ENCODE measurements at regions of chr11 and their contacts with region 1.

Region 1: GRCh38 chr11:38791302-38791961 is 2193.4 kb upstream of the RAG2 start:
- DNase-seq: peak; percentile 40 to 51
- H3K4me3 ChIP-seq: no peak overlapping the region
- H3K27ac ChIP-seq: no peak overlapping the region
- H3K4me1 ChIP-seq: no peaks in the 10 kb centered on the region
- H3K27me3 ChIP-seq: no peaks in the 10 kb centered on the region
- CTCF ChIP-seq: peak; percentile 97

Region 2: DNA sequence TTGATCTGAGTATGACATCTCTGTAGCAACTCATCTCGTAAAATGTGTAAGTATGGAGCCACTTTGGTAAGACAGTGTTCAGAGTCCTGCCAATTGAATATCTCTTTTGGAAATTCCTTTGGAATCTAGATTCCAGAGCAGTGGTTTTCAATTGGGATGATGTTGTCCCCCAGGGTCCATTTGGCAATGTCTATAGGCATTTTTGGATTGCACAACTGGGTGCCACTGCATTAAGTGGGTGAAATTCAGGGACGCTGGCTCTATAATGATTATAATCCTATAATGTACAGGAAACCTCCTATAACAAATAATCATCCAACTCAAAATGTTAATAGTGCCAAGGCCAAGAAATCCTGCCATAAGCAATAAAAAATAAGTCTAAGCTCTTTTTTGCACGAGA is 1788.6 kb before region 1 on chr11:
- CTCF ChIA-PET with region 1: no interaction called
- POLR2A ChIA-PET with region 1: no interaction called
- intact Hi-C with region 1: loop called (anchors 10 kb)
- DNase-seq: no peak
- H3K4me3 ChIP-seq: no peak overlapping the region
- H3K27ac ChIP-seq: no peak overlapping the region
- H3K4me1 ChIP-seq: no peaks in the 10 kb centered on the region
- H3K27me3 ChIP-seq: no peaks in the 10 kb centered on the region
- CTCF ChIP-seq: no peak

Region 3: DNA sequence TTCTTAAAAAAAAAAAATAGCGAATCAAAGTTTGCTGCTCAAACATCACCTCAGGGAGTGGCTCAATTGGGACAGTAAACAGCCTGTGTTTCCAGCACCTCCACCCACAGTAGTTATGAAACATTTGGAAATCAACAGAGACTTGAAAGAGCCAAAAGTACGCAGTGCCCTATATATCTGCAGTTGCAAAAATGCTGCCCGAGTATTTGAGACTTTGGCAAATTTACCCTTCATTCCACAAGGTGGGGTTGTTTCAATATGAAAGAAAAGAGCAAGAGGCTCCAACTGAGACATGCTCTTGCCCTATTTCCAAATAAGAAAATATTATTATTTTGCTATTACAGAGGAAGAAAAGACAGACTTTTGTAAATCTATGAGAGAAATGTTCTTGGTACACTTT is 1342.3 kb before region 1 on chr11:
- CTCF ChIA-PET with region 1: no interaction called
- POLR2A ChIA-PET with region 1: no interaction called
- intact Hi-C with region 1: loop called (anchors 1 kb)
- DNase-seq: peak; percentile 1 to 50
- H3K4me3 ChIP-seq: no peak overlapping the region
- H3K27ac ChIP-seq: no peak overlapping the region
- H3K4me1 ChIP-seq: no peaks in the 10 kb centered on the region
- H3K27me3 ChIP-seq: no peaks in the 10 kb centered on the region
- CTCF ChIP-seq: peak; percentile 85

Region 4: DNA sequence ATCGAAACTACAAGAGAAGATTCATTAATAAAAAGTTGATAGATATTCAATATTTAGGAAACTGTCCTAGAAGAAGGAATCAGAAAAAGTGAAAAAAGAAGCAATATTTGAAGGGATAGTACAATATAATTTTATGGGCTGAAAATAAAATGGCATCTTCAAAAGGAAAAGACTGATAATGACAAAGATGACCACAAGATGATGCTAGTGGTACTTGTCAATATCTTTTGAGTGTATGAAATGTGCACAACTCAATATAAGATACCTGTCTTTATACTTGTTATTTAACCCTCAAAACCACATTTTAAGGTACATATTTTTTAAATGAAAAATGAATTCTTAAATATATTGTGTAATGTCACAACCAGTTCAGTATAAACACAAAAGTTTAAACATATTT is 1133.8 kb before region 1 on chr11:
- CTCF ChIA-PET with region 1: no interaction called
- POLR2A ChIA-PET with region 1: no interaction called
- intact Hi-C with region 1: loop called (anchors 1 kb)
- DNase-seq: no peak
- H3K4me3 ChIP-seq: no peak overlapping the region
- H3K27ac ChIP-seq: no peak overlapping the region
- H3K4me1 ChIP-seq: no peaks in the 10 kb centered on the region
- H3K27me3 ChIP-seq: no peaks in the 10 kb centered on the region
- CTCF ChIP-seq: peak; percentile 73

Region 5: DNA sequence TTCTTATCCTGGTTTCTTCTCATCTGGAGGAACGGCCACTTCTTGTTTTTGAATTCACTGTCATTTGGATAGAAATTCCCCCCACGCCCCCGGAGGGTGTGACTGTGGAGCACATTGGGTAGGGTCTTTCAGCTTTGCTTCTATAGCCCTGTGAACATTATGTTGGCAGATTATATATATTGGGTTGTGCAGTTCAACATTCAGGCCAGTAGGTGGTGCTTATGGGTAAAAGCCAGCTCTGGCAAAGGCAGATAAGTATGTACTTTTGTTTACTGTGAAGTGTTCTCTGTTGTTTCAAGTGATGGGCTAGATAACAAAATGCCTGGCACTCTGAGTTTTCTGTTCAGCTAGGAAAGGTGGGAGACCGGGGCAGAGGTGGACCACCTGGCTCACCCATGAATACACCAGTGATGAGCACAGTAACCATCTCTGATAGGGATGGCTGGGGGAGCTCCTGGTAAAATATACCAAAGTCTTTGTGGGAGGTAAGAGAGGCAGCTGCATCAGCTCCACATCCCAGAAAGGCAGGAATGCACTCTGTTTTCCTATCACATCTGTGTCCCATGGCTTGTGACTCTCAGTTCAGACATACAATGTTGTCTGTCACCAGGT is 845.2 kb before region 1 on chr11:
- CTCF ChIA-PET with region 1: no interaction called
- POLR2A ChIA-PET with region 1: no interaction called
- intact Hi-C with region 1: loop called (anchors 2 kb)
- DNase-seq: peak in 1 of 2 experiments; percentile 35
- H3K4me3 ChIP-seq: no peak overlapping the region
- H3K27ac ChIP-seq: no peak overlapping the region
- H3K4me1 ChIP-seq: no peaks in the 10 kb centered on the region; the same call in 1 of the 2 replicates
- H3K27me3 ChIP-seq: no peaks in the 10 kb centered on the region
- CTCF ChIP-seq: peak; percentile 95

Region 6: GRCh38 chr11:37988031-37988430 is 803.4 kb before region 1 on chr11:
- CTCF ChIA-PET with region 1: no interaction called
- POLR2A ChIA-PET with region 1: no interaction called
- intact Hi-C with region 1: loop called (anchors 1 kb)
- DNase-seq: peak; percentile 30 to 68
- H3K4me3 ChIP-seq: no peak overlapping the region
- H3K27ac ChIP-seq: peak overlapping the region; percentile 27; the same call in 1 of the 2 replicates
- H3K4me1 ChIP-seq: 0 out of 2 replicates have a peak, but pooled peaks cover 6% of the 10 kb centered on the region
- H3K27me3 ChIP-seq: no peaks in the 10 kb centered on the region
- CTCF ChIP-seq: no peak

Region 7: GRCh38 chr11:38402063-38402462 is 389.4 kb before region 1 on chr11:
- CTCF ChIA-PET with region 1: no interaction called
- POLR2A ChIA-PET with region 1: no interaction called
- intact Hi-C with region 1: no loop called
- DNase-seq: no peak
- H3K4me3 ChIP-seq: no peak overlapping the region
- H3K27ac ChIP-seq: no peak overlapping the region
- H3K4me1 ChIP-seq: no peaks in the 10 kb centered on the region
- H3K27me3 ChIP-seq: no peaks in the 10 kb centered on the region
- CTCF ChIP-seq: no peak

Region 8: GRCh38 chr11:38751421-38751820 is 40.0 kb before region 1 on chr11:
- CTCF ChIA-PET with region 1: no interaction called
- POLR2A ChIA-PET with region 1: no interaction called
- intact Hi-C with region 1: no loop called
- DNase-seq: no peak
- H3K4me3 ChIP-seq: no peak overlapping the region
- H3K27ac ChIP-seq: no peak overlapping the region
- H3K4me1 ChIP-seq: no peaks in the 10 kb centered on the region
- H3K27me3 ChIP-seq: no peaks in the 10 kb centered on the region
- CTCF ChIP-seq: no peak

Region 9: DNA sequence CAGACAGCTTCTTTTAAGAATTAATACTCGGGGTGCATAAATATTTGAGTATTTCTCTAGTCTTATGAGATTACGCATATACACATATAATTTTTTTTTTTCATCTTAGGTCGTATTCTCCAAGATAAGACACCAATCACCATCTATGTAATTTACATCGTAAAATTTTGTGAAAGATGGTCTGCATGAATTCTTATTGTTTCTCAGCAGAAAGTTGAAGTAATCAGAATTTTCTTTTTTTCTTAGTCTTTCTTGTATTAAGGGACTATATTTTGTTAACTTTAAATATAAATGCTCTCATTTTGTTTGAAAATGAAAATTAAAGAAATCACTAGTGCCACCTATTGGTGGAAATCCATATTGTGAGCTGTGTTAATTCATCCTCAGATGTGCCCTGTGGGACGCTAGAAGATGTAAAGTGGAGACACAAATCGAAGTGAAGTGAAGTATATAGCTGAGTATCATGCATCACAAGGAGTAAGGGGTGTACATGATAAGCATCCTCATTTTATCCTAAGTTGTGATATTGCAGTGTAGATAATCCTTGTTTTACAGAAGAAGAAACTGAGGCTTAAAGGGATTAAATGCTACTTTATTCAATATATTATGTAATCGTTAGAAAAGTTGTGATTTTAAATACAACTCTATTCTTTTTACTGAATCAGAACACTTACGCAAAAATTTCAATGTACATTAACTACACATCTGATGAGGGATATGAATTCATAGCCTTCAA is 583.7 kb after region 1 on chr11:
- CTCF ChIA-PET with region 1: no interaction called
- POLR2A ChIA-PET with region 1: no interaction called
- intact Hi-C with region 1: loop called (anchors 10 kb)
- DNase-seq: no peak
- H3K4me3 ChIP-seq: no peak overlapping the region
- H3K27ac ChIP-seq: no peak overlapping the region
- H3K4me1 ChIP-seq: no peaks in the 10 kb centered on the region
- H3K27me3 ChIP-seq: no peaks in the 10 kb centered on the region
- CTCF ChIP-seq: peak; percentile 84

Region 10: DNA sequence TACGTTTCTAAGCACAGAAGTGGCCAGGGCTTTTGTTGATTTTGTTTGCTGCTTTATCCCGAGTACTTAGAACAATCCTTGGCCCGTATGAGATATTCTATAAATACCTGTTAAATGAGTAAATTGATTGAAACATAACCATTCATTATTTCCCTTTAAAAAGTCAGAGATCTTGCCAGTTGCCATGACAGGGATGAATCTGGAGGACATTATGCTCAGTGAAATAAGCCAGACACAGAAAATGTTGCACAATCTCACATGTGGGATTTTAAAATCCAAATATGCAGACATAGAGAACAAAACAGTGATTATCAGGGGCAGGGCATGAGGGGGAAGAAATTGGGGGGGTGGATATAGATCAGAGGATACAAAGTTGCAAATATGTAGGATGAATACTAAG is 1428.0 kb after region 1 on chr11:
- CTCF ChIA-PET with region 1: no interaction called
- POLR2A ChIA-PET with region 1: no interaction called
- intact Hi-C with region 1: no loop called
- DNase-seq: no peak
- H3K4me3 ChIP-seq: no peak overlapping the region
- H3K27ac ChIP-seq: no peak overlapping the region
- H3K4me1 ChIP-seq: no peaks in the 10 kb centered on the region
- H3K27me3 ChIP-seq: no peaks in the 10 kb centered on the region
- CTCF ChIP-seq: no peak